Mammary epithelial cell (primary cell): ENCODE measurements at regions of chr9 and their contacts with region 1.

Region 1: GRCh38 chr9:4297151-4297785 is 2.6 kb downstream of the GLIS3 start:
- DNase-seq: peak; percentile 84
- H3K4me3 ChIP-seq: peak overlapping the region; percentile 43 to 62 (median 57)
- H3K27ac ChIP-seq: peak overlapping the region; percentile 64
- H3K4me1 ChIP-seq: peaks cover 64% of the 10 kb centered on the region
- H3K27me3 ChIP-seq: no peaks in the 10 kb centered on the region
- CTCF ChIP-seq: peak in 1 of 2 donors; percentile 58

Region 2: GRCh38 chr9:3525836-3526164 is 771.5 kb before region 1 on chr9 and contains the start of gene RFX3:
- CTCF ChIA-PET with region 1: no interaction called
- dilution Hi-C with region 1: no loop called
- in situ Hi-C with region 1: no loop called
- intact Hi-C with region 1: loop called (anchors 5 kb)
- DNase-seq: peak; percentile 94
- H3K4me3 ChIP-seq: peak within 1 kb of the TSS; percentile 92 to 100 (median 98)
- H3K27ac ChIP-seq: peak within 1 kb of the TSS; percentile 99
- H3K4me1 ChIP-seq: peaks cover 8% of the 10 kb centered on the region
- H3K27me3 ChIP-seq: no peaks in the 10 kb centered on the region
- CTCF ChIP-seq: no peak
- total RNA-seq, gene RFX3: 2.3 to 7.9 TPM

Region 3: GRCh38 chr9:4055032-4055431 is 242.2 kb before region 1 on chr9:
- CTCF ChIA-PET with region 1: no interaction called
- dilution Hi-C with region 1: no loop called
- in situ Hi-C with region 1: no loop called
- intact Hi-C with region 1: no loop called
- DNase-seq: no peak
- H3K4me3 ChIP-seq: no peak overlapping the region
- H3K27ac ChIP-seq: no peak overlapping the region
- H3K4me1 ChIP-seq: peaks cover 7% of the 10 kb centered on the region
- H3K27me3 ChIP-seq: no peaks in the 10 kb centered on the region
- CTCF ChIP-seq: no peak

Region 4: DNA sequence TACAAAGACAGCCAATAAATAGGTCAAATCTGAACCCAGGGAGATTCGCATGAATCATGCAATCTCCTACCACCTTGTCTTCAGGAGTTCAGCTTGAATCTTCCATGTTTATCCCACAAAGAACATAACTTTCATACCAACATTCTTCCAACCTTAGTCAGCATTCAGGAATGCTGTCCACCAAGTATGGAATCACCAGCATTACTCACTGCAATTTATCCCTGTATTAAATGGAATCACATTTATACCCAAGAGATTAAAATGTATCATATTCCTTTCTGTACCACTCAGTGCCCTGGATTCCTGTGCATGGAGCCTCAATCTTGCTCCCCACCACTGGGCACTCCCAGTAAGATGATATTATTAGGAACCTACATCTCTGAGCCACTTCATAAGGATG is 160.0 kb before region 1 on chr9:
- CTCF ChIA-PET with region 1: no interaction called
- dilution Hi-C with region 1: no loop called
- in situ Hi-C with region 1: no loop called
- intact Hi-C with region 1: loop called (anchors 5 kb)
- DNase-seq: peak; percentile 93
- H3K4me3 ChIP-seq: peak overlapping the region in 1 of 3 experiments; percentile 4
- H3K27ac ChIP-seq: peak overlapping the region; percentile 85
- H3K4me1 ChIP-seq: peaks cover 35% of the 10 kb centered on the region
- H3K27me3 ChIP-seq: no peaks in the 10 kb centered on the region
- CTCF ChIP-seq: no peak

Region 5: DNA sequence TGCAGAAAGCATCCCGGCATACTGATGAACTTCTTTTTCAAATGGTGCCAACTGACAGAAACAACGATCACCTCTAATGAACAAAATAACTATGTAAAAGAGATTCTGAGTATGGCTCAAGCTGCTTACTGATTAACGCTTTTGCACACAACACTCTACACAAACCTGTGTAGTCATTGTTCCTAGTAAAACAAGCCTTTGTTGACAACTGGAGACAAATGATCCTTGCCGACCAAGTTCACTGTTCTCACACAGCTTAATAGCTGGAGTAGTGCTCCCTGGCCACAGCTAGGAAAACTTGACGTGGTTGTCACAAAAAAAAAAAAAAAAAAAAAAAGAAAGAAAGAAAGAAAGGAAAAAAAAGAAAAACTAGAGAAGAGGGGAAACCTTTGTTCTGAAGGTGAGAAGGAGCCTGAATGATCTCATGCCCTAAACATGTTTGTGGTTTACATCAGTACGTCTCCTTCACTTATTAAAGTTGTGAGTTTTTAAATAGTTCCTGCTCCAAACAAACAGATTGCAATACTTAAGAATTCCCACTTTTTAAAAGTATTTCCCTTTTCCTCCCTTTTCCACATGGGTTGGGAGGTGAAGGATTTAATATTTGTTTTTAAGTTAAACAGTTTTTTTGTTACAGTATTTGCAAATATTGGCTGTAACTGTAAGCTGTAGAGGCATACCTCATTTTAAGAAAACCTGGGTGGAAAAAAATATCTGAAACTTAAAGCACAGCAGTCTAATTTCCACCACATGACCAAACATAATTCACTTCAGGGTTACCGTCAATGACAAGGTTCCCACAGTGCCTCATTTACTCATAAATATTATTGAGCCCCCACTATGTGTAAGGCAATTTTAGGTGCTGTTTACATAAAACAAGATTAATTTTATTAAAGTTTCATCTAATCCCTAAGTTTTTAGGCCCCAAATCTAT is 61.1 kb before region 1 on chr9:
- CTCF ChIA-PET with region 1: no interaction called
- dilution Hi-C with region 1: no loop called
- in situ Hi-C with region 1: no loop called
- intact Hi-C with region 1: loop called (anchors 5 kb)
- DNase-seq: peak; percentile 73
- H3K4me3 ChIP-seq: peak overlapping the region in 1 of 3 experiments; percentile 5
- H3K27ac ChIP-seq: peak overlapping the region; percentile 76
- H3K4me1 ChIP-seq: peaks cover 32% of the 10 kb centered on the region
- H3K27me3 ChIP-seq: no peaks in the 10 kb centered on the region
- CTCF ChIP-seq: no peak

Region 6: GRCh38 chr9:4258321-4258720 is 38.9 kb before region 1 on chr9:
- CTCF ChIA-PET with region 1: no interaction called
- dilution Hi-C with region 1: no loop called
- in situ Hi-C with region 1: no loop called
- intact Hi-C with region 1: loop called (anchors 2 kb)
- DNase-seq: peak; percentile 62
- H3K4me3 ChIP-seq: no peak overlapping the region
- H3K27ac ChIP-seq: peak overlapping the region; percentile 67
- H3K4me1 ChIP-seq: peaks cover 32% of the 10 kb centered on the region
- H3K27me3 ChIP-seq: no peaks in the 10 kb centered on the region
- CTCF ChIP-seq: no peak

Region 7: DNA sequence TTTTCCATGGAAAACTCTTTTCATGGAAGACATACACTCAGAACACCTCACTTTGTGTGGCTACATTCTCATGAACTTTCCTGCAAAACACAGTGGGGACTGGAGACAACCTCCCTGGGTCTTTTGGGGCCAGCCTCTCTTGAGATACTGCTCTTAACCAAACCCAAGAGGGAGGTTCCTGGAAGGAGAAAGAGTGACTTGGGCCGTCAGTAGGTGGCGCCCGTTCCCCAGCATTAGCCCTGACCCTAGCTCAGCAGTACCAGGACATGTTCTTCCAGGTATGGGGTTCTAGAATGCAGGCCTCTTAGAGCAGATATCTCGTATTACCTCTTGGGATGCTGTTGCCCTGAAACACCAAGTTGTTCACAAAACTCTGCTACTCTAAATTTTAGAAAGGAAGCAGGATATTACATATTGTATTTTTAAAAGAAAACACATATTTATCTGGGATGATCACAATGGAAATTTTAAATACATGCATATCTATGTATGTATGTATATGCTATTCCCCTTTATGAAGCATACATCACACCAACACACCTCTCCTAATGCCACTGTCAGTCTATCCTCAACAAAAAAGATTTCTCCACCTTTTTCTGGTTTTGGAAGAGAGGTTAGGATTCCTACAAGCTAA is 18.4 kb after region 1 on chr9:
- CTCF ChIA-PET with region 1: interaction called, 14 read pairs
- dilution Hi-C with region 1: no loop called
- in situ Hi-C with region 1: no loop called
- intact Hi-C with region 1: no loop called
- DNase-seq: peak; percentile 50
- H3K4me3 ChIP-seq: no peak overlapping the region
- H3K27ac ChIP-seq: no peak overlapping the region
- H3K4me1 ChIP-seq: no peaks in the 10 kb centered on the region
- H3K27me3 ChIP-seq: no peaks in the 10 kb centered on the region
- CTCF ChIP-seq: peak; percentile 86 to 92

Region 8: DNA sequence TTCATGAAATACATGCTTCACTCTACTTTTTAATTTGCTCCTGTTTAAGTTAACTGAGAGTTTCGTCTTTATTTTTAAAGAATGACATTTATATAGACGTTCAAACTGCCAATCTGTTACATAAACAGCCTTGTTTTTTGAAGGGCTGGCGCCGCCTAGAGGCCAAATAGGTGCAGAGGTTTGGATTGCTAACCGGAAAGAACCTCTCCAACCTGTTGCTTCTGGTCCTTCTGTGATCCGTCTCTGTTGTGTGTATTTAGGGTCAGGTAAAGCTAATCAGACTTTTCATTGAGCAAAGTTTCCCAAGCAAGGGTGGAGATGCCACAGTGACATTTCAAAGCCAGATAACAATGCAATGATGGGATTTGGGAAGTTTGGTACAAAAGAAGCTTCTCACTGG is 42.1 kb after region 1 on chr9:
- CTCF ChIA-PET with region 1: no interaction called
- dilution Hi-C with region 1: no loop called
- in situ Hi-C with region 1: no loop called
- intact Hi-C with region 1: loop called (anchors 1 kb)
- DNase-seq: peak; percentile 80
- H3K4me3 ChIP-seq: no peak overlapping the region
- H3K27ac ChIP-seq: no peak overlapping the region
- H3K4me1 ChIP-seq: peaks cover 7% of the 10 kb centered on the region
- H3K27me3 ChIP-seq: no peaks in the 10 kb centered on the region
- CTCF ChIP-seq: peak; percentile 96 to 99

Region 9: GRCh38 chr9:4435197-4435596 is 137.9 kb after region 1 on chr9:
- CTCF ChIA-PET with region 1: no interaction called
- dilution Hi-C with region 1: no loop called
- in situ Hi-C with region 1: no loop called
- intact Hi-C with region 1: no loop called
- DNase-seq: peak; percentile 7
- H3K4me3 ChIP-seq: no peak overlapping the region
- H3K27ac ChIP-seq: no peak overlapping the region
- H3K4me1 ChIP-seq: no peaks in the 10 kb centered on the region
- H3K27me3 ChIP-seq: no peaks in the 10 kb centered on the region
- CTCF ChIP-seq: no peak

Region 10: DNA sequence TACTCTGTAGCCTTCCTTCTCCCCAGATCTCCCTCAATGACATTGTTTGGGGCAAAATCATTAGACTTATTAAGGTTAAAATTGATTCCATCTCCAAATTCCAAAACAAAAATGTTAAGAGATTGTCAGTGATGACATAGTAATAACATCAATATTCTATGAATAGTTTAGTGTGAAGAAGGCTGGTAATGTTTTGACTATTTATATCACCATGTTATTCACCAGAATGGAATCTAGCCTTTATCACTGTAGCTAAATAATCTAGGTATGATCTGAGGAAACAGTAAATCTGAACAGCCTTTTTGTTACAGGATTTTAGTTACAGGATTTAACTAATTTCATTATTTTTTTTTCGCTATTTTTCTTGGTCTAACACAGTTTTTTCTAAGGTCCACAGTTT is 363.9 kb after region 1 on chr9:
- CTCF ChIA-PET with region 1: no interaction called
- dilution Hi-C with region 1: no loop called
- in situ Hi-C with region 1: no loop called
- intact Hi-C with region 1: no loop called
- DNase-seq: peak; percentile 20
- H3K4me3 ChIP-seq: peak overlapping the region in 2 of 3 experiments; percentile 3 to 92
- H3K27ac ChIP-seq: peak overlapping the region; percentile 55
- H3K4me1 ChIP-seq: peaks cover 43% of the 10 kb centered on the region
- H3K27me3 ChIP-seq: no peaks in the 10 kb centered on the region
- CTCF ChIP-seq: no peak